Motor neuron (in vitro differentiated cells): ENCODE measurements at regions of chr5 and their contacts with region 1.

Region 1: DNA sequence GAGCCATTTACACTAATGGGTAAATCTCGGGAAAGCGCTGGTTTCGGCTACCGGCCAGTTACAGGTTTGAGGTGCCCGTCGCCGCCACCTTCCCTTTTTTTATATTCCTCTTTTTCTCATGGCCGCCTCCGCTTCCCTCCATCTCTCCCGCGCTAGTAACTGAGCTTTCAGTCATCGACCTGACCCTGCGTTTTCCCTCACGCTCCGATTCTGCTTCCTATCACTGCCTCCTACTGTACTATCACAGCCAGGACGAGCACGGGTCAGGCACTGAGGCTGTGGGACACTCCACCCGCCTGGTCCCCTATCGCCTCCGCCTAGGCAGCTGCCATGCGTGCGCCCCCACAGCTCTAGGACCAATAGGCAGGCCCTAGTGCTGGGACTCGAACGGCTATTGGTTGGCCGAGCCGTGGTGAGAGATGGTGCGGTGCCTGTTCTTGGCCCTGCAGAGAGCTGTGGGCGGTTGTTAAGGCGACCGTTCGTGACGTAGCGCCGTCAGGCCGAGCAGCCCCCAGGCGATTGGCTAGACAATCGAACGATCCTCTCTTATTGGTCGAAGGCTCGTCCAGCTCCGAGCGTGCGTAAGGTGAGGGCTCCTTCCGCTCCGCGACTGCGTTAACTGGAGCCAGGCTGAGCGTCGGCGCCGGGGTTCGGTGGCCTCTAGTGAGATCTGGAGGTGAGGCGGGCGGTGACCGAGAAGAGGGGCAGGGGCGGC is at the start of gene HMGCR:
- ATAC-seq: peak; percentile 87 to 95 (median 94)
- H3K4me3 ChIP-seq: peak within 1 kb of the TSS; percentile 68 to 79 (median 77)
- H3K27ac ChIP-seq: peak within 1 kb of the TSS; percentile 91 to 92
- H3K4me1 ChIP-seq: peaks cover 4 to 30% of the 10 kb centered on the region in 2 donors
- total RNA-seq, gene HMGCR: 33.1 to 198 (median 105) TPM

Region 2: GRCh38 chr5:74766849-74767578 is 569.8 kb before region 1 on chr5 and contains the starts of genes GFM2 and NSA2:
- in situ Hi-C with region 1: loop called in 1 of 9 experiments (anchors 25 kb)
- ATAC-seq: peak; percentile 94 to 99 (median 98)
- H3K4me3 ChIP-seq: peak within 1 kb of the TSS; percentile 65 to 100 (median 98)
- H3K27ac ChIP-seq: peak within 1 kb of the TSS; percentile 64 to 93
- H3K4me1 ChIP-seq: peaks cover 17 to 19% of the 10 kb centered on the region in 2 donors
- total RNA-seq, gene GFM2: 29.4 to 58.9 (median 39.3) TPM
- total RNA-seq, gene NSA2: 90.6 to 166 (median 114) TPM

Region 3: DNA sequence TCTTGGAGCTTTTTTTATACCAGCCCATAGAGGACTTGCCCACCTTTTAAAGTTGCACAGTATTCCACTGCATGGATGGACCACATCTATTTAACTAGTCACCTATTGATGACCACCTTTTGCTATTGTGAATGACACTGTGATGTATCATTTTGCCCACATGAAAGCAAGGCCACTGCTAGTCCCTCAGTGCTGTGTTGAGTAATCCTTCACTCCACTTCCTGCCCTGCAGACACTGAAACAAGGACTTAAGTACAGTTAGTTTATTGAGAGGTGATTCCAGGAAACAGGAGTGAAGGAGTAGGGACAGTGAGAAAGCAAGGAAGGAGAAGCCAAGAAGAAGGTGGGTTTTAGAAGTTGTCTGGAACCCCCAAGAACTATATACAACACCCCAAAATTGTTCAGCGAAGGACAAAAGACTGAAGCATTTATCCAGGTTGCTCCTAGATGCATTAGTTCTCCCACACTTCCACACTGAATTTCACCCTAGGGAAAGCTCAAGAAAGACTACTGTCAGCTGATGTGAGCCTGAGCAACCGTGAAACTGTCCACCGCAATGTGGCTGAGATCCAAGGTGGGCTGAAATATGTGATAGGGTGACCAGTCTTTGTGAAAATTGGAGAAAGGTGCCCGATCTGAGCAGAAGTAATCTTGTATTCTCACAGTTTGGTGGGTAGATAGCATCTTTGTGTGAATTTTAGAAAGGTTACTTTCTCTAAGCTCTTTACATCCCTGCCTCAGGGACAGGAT is 54.9 kb before region 1 on chr5:
- in situ Hi-C with region 1: loop called in 1 of 9 experiments (anchors 10 kb)
- ATAC-seq: no peak
- H3K4me3 ChIP-seq: no peak overlapping the region
- H3K27ac ChIP-seq: no peak overlapping the region
- H3K4me1 ChIP-seq: peaks cover 5% of the 10 kb centered on the region in 2 donors